ENCODE measurements at regions of chr2 and their contacts with region 1.

Region 1: GRCh38 chr2:164992818-164993217 is 37.5 kb upstream of the SLC38A11 start:
- DNase-seq: peak in 1 of 2 experiments; percentile 55
- H3K4me3 ChIP-seq: no peak overlapping the region
- H3K4me3 Mint-ChIP-seq: no peak overlapping the region
- H3K27ac Mint-ChIP-seq: no peak overlapping the region
- H3K4me1 ChIP-seq: no peaks in the 10 kb centered on the region
- H3K4me1 Mint-ChIP-seq: no peaks in the 10 kb centered on the region
- H3K27me3 ChIP-seq: no peaks in the 10 kb centered on the region
- H3K27me3 Mint-ChIP-seq: no peaks in the 10 kb centered on the region
- CTCF ChIP-seq: peak; percentile 48 to 57

Region 2: DNA sequence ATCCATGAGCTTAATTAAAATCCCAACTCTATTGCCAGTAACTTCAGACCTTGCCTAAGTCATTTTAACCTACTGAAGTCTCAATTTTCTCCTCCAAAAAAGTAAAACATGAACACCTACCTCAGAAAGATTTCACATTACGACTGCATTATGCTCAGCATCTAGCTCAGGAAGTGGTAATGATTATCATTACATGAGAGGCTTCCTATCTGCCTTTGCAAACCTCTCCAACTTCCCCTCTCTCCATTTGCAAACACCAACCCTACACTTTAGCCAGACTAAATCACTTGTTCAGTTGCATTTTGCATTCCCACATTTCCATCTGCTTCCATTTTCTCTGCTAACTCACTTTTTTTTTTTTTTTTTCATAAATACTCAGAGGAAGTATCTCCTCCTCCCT is 44.3 kb before region 1 on chr2:
- CTCF ChIA-PET with region 1: no interaction called
- POLR2A ChIA-PET with region 1: no interaction called
- intact Hi-C with region 1: loop called (anchors 1 kb)
- DNase-seq: no peak
- H3K4me3 ChIP-seq: no peak overlapping the region
- H3K4me3 Mint-ChIP-seq: no peak overlapping the region
- H3K27ac Mint-ChIP-seq: no peak overlapping the region
- H3K4me1 ChIP-seq: no peaks in the 10 kb centered on the region
- H3K4me1 Mint-ChIP-seq: no peaks in the 10 kb centered on the region
- H3K27me3 ChIP-seq: no peaks in the 10 kb centered on the region
- H3K27me3 Mint-ChIP-seq: no peaks in the 10 kb centered on the region
- CTCF ChIP-seq: no peak

Region 3: GRCh38 chr2:164960159-164960558 is 32.7 kb before region 1 on chr2:
- CTCF ChIA-PET with region 1: no interaction called
- POLR2A ChIA-PET with region 1: no interaction called
- intact Hi-C with region 1: no loop called
- DNase-seq: no peak
- H3K4me3 ChIP-seq: no peak overlapping the region
- H3K4me3 Mint-ChIP-seq: no peak overlapping the region
- H3K27ac Mint-ChIP-seq: no peak overlapping the region
- H3K4me1 ChIP-seq: no peaks in the 10 kb centered on the region
- H3K4me1 Mint-ChIP-seq: no peaks in the 10 kb centered on the region
- H3K27me3 ChIP-seq: no peaks in the 10 kb centered on the region
- H3K27me3 Mint-ChIP-seq: no peaks in the 10 kb centered on the region
- CTCF ChIP-seq: no peak

Region 4: DNA sequence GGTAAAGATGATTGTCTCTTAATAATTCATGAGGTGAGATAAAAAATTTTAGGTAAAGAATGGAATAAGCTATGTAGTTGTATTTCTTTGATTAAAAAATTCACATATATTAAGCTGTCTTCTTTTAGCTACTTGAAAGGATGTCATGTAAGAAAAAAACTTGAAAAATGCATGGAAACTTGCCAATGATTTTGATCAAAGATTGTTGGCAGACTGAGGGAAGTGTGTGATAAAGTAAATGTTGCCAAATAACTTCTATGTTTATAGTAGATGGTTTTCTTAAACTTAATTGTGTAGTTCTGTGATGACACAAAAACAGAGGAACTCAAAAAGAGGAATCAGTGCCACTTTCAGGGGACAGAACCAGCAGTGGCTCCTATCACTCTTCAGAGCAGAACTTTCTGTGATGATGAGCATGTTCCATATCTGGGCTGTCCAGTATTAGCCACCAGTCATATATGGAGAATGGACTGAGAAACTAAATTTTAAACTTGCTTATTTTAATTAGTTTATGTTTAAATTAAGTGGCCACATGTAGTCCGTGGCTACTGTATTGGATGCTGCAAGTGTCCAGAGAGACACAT is 14.4 kb after region 1 on chr2:
- CTCF ChIA-PET with region 1: no interaction called
- POLR2A ChIA-PET with region 1: no interaction called
- intact Hi-C with region 1: no loop called
- DNase-seq: no peak
- H3K4me3 ChIP-seq: no peak overlapping the region
- H3K4me3 Mint-ChIP-seq: no peak overlapping the region
- H3K27ac Mint-ChIP-seq: no peak overlapping the region
- H3K4me1 ChIP-seq: no peaks in the 10 kb centered on the region
- H3K4me1 Mint-ChIP-seq: no peaks in the 10 kb centered on the region
- H3K27me3 ChIP-seq: no peaks in the 10 kb centered on the region
- H3K27me3 Mint-ChIP-seq: peaks cover 16% of the 10 kb centered on the region
- CTCF ChIP-seq: no peak

Region 5: DNA sequence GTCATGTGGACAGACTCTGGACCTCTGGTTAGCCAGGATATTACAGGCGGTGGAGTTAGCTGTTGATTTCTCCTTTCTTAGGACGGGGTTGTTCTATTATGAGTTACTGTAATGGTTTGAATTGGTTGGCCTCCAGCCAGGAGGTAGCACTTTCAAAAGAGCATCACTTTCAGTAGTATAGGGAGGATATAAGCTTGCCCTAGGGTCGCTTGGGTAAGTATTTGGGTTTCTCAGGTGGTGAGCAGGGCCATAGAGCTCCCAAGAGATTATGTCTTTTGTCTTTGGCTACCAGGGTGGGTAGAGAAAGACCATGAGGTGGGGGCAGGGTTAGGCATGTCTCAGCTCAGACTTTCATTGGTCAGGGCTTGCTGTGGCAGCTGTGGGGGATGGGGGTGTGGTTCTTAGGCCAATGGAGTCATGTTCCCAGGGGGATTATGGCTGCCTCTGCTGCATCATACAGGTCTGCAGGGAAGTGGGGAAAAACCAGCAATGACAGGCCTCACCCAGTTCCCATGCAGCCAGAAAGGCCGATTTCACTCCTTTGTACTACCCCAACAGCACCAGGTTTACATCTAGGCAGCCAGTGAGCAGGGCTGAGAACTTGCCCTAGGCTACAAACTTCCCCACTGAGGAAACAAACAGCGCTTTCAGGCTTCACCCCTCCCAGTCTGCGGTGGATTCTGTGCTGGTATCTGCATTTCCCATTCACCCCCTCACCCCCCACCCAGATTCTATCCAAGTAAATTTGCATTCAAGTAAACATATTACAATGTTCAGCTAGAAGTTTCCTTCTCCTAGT is 51.9 kb after region 1 on chr2:
- CTCF ChIA-PET with region 1: no interaction called
- POLR2A ChIA-PET with region 1: no interaction called
- intact Hi-C with region 1: no loop called
- DNase-seq: no peak
- H3K4me3 ChIP-seq: no peak overlapping the region
- H3K4me3 Mint-ChIP-seq: no peak overlapping the region
- H3K27ac Mint-ChIP-seq: no peak overlapping the region
- H3K4me1 ChIP-seq: no peaks in the 10 kb centered on the region
- H3K4me1 Mint-ChIP-seq: no peaks in the 10 kb centered on the region
- H3K27me3 ChIP-seq: no peaks in the 10 kb centered on the region
- H3K27me3 Mint-ChIP-seq: peaks cover 5% of the 10 kb centered on the region
- CTCF ChIP-seq: no peak

Region 6: DNA sequence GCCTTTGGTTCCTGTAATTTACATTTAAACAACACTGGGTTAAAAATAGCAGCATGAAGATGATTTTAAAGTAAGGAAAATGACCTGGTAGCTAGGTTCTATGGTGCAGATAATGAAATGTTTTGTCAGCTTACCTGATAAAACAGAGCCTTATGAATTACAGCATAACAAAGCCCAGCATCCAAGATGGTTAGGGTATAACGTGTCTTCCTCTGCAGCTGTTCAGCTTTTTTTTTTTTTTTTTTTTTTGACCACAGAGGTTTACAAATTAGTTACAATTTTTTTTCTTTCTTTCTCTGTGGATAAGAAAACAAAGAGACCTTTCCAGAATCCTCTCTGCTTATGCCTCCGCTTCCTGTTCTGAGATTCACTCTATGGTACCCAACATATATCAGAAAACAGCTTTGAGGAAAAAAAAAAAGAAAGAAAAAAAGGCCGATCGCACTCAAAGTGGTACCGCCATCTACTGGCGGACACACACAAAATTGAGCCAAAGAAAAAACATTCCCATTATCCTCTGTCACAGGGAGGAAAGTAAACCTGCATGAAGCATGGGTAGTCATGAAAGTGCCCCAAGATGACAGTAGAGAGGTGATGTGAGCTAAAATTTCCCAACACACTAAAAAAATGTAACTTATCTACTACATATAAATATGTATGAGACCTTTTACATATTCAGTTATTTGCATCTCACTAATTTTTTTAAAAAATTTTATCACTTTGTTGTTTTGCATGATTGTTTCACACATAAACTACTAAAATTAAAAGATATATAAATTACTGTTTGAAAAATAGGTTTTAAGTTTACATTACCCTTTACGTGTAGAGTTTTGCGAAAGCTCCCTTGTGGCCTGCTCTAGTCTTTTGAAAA is 211.1 kb after region 1 on chr2 and contains the start of gene SCN3A:
- CTCF ChIA-PET with region 1: interaction called, 28 read pairs
- POLR2A ChIA-PET with region 1: no interaction called
- intact Hi-C with region 1: loop called (anchors 1 kb)
- DNase-seq: peak; percentile 40 to 58
- H3K4me3 ChIP-seq: no peak within 1 kb of the TSS
- H3K4me3 Mint-ChIP-seq: no peak within 1 kb of the TSS
- H3K27ac Mint-ChIP-seq: no peak within 1 kb of the TSS
- H3K4me1 ChIP-seq: no peaks in the 10 kb centered on the region
- H3K4me1 Mint-ChIP-seq: no peaks in the 10 kb centered on the region
- H3K27me3 ChIP-seq: no peaks in the 10 kb centered on the region
- H3K27me3 Mint-ChIP-seq: no peaks in the 10 kb centered on the region
- CTCF ChIP-seq: peak; percentile 67 to 80
- total RNA-seq, gene SCN3A: not detected in 2 replicates

Region 7: DNA sequence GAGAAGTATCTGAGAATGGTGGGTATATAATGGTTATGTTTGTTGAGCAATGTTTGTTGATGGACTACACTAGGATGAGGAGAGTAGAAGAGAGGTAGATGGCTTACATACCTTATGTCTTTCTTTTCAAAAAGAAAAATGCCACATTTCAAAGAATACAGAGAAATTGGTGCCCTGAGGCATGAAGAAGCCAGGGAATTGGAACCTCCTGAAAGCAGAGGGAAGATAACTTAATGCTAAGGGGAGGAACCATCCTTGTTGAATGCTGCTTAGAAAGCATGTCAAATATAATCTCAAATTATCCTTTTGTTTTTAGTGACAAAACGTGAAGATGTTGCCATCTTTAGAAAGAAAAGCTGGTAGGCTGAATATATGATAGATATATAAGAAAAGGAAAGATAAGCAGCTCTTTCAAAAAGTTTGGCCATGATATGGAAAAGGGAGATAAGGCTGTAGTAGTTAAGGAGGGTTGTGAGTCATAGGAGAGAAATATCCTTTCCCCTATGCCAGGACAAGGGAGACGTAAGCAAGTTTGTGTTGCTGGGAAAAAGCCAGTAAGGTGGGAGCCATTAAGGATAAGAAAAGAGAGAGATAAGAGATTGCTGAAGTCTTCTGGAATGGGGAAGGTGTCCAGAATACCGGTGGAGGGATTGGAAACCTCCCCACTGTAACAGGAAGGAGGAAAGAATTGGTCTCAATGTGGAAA is 312.7 kb after region 1 on chr2:
- CTCF ChIA-PET with region 1: interaction called, 3 read pairs
- POLR2A ChIA-PET with region 1: no interaction called
- intact Hi-C with region 1: loop called (anchors 5 kb)
- DNase-seq: no peak
- H3K4me3 ChIP-seq: no peak overlapping the region
- H3K4me3 Mint-ChIP-seq: no peak overlapping the region
- H3K27ac Mint-ChIP-seq: no peak overlapping the region
- H3K4me1 ChIP-seq: 0 out of 2 replicates have a peak, but pooled peaks cover 4% of the 10 kb centered on the region
- H3K4me1 Mint-ChIP-seq: peaks cover 8% of the 10 kb centered on the region
- H3K27me3 ChIP-seq: no peaks in the 10 kb centered on the region
- H3K27me3 Mint-ChIP-seq: no peaks in the 10 kb centered on the region
- CTCF ChIP-seq: no peak

Measured in Caco-2 (cell line).